ENCODE measurements at regions of chr2 and their contacts with region 1.

Region 1: GRCh38 chr2:8681786-8682692 is at the start of gene ID2:
- DNase-seq: peak; percentile 99 to 100
- ATAC-seq: peak; percentile 69 to 90 (median 86)
- H3K4me3 ChIP-seq: peak within 1 kb of the TSS; percentile 67 to 96 (median 80)
- H3K27ac ChIP-seq: peak within 1 kb of the TSS; percentile 93 to 100 (median 99)
- H3K4me1 ChIP-seq: peaks cover 0 to 53% (median 32%) of the 10 kb centered on the region in 9 donors
- H3K27me3 ChIP-seq: peaks cover 0 to 12% (median 0%) of the 10 kb centered on the region in 7 donors
- CTCF ChIP-seq: no peak
- total RNA-seq, gene ID2: 20.8 to 49.7 (median 27.2) TPM

Region 2: GRCh38 chr2:7118606-7119503 is 1563.2 kb before region 1 on chr2:
- intact Hi-C with region 1: loop called in 1 of 10 experiments (anchors 10 kb)
- DNase-seq: no peak
- ATAC-seq: peak in 7 of 8 donors; percentile 28 to 72 (median 51)
- H3K4me3 ChIP-seq: no peak overlapping the region
- H3K27ac ChIP-seq: no peak overlapping the region
- H3K4me1 ChIP-seq: peaks cover 0 to 10% (median 0%) of the 10 kb centered on the region in 9 donors
- H3K27me3 ChIP-seq: no peaks in the 10 kb centered on the region
- CTCF ChIP-seq: peak in 8 of 9 donors; percentile 5 to 62 (median 52)

Region 3: GRCh38 chr2:7725171-7725849 is 956.7 kb before region 1 on chr2:
- intact Hi-C with region 1: loop called in 3 of 10 experiments (anchors 5 to 10 kb)
- DNase-seq: no peak
- ATAC-seq: peak in 2 of 8 donors; percentile 25 to 34
- H3K4me3 ChIP-seq: peak overlapping the region in 1 of 10 donors; percentile 40
- H3K27ac ChIP-seq: peak overlapping the region in 1 of 10 donors; percentile 68
- H3K4me1 ChIP-seq: no peaks in the 10 kb centered on the region
- H3K27me3 ChIP-seq: no peaks in the 10 kb centered on the region
- CTCF ChIP-seq: peak in 5 of 9 donors; percentile 16 to 43 (median 28)

Region 4: DNA sequence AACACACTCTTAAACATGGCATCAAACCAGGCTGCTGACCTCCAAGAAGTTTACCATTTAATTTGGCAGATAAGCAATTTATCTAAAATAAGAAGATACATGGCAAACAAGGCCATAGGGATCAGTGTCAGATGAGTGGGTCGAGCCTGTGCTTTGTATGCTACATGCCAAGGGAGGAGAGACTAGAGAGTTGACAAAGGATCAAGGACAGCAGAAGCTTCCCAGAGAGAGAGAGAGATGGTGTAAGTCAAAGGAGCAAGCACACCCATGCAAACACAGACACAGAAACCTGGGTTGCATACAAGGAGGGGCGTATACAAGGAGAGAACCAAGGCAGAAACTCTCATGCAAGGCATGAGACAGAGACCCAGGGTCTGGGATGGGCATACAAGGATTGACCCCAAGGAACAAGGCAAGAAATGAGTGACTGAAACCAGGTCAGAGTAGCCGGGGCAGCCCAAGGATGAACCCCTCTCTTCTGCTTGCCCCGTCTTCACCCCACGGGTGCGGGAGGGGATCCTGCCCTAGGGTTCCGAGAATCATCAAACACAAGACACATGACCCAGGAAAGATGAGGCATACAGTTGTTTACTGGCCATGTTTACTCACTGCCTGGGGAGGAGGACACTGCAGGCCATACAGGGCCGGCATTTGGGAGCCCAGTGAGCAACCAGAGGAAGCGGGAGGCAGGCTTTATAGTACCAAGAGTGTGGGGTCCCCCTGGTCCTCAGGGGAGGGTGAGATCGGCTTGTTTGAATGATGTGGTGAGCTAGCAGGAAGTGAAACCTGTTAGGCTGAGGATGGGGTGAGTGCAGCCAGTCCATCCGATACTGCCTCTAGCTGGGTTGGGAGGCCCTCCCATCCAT is 529.4 kb before region 1 on chr2:
- intact Hi-C with region 1: loop called in 2 of 10 experiments (anchors 10 kb)
- DNase-seq: no peak
- ATAC-seq: no peak
- H3K4me3 ChIP-seq: no peak overlapping the region
- H3K27ac ChIP-seq: peak overlapping the region in 1 of 10 donors; percentile 16
- H3K4me1 ChIP-seq: peaks cover 0 to 19% (median 0%) of the 10 kb centered on the region in 9 donors
- H3K27me3 ChIP-seq: no peaks in the 10 kb centered on the region
- CTCF ChIP-seq: no peak

Region 5: GRCh38 chr2:8412586-8412985 is 269.5 kb before region 1 on chr2:
- intact Hi-C with region 1: loop called in 1 of 10 experiments (anchors 10 kb)
- DNase-seq: peak in 1 of 2 donors; percentile 27
- ATAC-seq: peak in 6 of 8 donors; percentile 19 to 67 (median 37)
- H3K4me3 ChIP-seq: no peak overlapping the region
- H3K27ac ChIP-seq: peak overlapping the region in 6 of 10 donors; percentile 25 to 68 (median 42)
- H3K4me1 ChIP-seq: peaks cover 0 to 64% (median 11%) of the 10 kb centered on the region in 9 donors
- H3K27me3 ChIP-seq: no peaks in the 10 kb centered on the region
- CTCF ChIP-seq: no peak

Region 6: DNA sequence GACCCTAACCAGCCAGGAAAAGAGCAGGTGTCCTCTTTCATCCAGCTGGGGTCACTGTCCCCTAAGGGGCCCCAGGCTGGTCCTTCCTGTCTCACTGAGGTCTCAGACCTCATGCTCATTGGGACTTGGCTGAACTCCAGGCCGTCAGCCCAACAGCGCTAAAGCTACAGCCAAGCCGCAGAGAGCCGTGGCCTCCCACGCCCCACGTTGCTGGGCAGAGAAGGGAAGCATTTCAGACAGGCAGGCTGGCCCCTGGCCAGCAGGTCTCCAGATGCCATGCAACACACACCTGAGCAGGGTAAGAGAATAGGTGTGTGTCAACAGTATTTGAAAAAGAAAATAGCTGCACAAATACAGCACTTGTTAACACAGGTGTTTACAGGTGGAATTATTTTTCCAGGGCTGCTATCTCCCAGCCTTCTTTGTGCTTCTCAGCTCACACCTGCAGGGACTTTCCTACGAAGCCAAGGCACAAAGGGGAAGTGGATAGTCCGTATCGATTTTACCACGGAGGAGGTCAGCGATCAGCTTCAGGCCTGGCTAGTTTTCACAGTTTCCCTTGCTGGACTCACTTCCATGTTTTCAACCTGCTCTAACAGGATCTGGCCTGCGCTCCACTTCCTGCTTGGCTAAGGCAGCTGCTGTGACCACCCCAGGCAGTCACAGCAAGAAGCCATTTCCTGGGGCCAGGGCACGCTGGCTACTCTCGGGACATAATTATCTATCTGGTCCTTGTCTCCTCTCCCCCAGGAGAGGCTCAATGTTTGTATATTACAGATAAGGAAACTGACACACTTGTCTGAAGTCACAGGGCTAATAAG is 156.2 kb before region 1 on chr2:
- intact Hi-C with region 1: loop called in 5 of 10 experiments (anchors 5 to 10 kb)
- DNase-seq: peak; percentile 78 to 85
- ATAC-seq: peak; percentile 77 to 94 (median 90)
- H3K4me3 ChIP-seq: no peak overlapping the region
- H3K27ac ChIP-seq: peak overlapping the region in 5 of 10 donors; percentile 25 to 61 (median 35)
- H3K4me1 ChIP-seq: peaks cover 9 to 48% (median 19%) of the 10 kb centered on the region in 9 donors
- H3K27me3 ChIP-seq: no peaks in the 10 kb centered on the region
- CTCF ChIP-seq: peak in 7 of 9 donors; percentile 24 to 58 (median 44)

Region 7: DNA sequence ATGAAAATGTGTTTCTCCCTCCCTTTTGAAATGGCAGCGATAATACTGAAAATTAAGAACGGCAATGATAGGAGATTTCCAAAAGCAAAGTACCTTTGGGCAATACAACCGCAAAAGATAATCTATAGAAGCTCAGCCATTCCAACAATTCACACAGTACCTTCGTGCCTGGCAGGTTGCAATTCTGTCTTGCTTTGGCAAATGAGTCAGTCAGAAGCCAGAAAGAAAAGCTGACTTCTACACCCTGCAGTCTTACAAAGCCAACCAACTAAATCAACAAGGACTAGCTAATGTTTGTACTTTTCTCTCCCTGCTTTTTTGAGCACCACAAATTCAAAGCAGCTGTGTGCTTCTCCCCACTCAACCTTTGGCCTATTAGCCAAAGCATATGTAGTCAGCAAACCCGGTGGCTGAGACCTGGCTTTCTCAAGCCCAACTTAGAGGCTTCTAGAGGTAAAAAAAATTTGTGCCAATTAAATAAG is 25.8 kb before region 1 on chr2:
- intact Hi-C with region 1: no loop called
- DNase-seq: no peak
- ATAC-seq: no peak
- H3K4me3 ChIP-seq: no peak overlapping the region
- H3K27ac ChIP-seq: no peak overlapping the region
- H3K4me1 ChIP-seq: peaks cover 0 to 14% (median 10%) of the 10 kb centered on the region in 9 donors
- H3K27me3 ChIP-seq: no peaks in the 10 kb centered on the region
- CTCF ChIP-seq: no peak

Region 8: GRCh38 chr2:8779795-8780671 is 98.0 kb after region 1 on chr2:
- intact Hi-C with region 1: no loop called
- DNase-seq: no peak
- ATAC-seq: peak in 2 of 8 donors; percentile 24 to 35
- H3K4me3 ChIP-seq: no peak overlapping the region
- H3K27ac ChIP-seq: peak overlapping the region in 2 of 10 donors; percentile 4 to 8
- H3K4me1 ChIP-seq: peaks cover 0 to 26% (median 3%) of the 10 kb centered on the region in 9 donors
- H3K27me3 ChIP-seq: no peaks in the 10 kb centered on the region
- CTCF ChIP-seq: no peak

Measured in heart right ventricle (tissue), 16 donors.